GM12878 (cell line): ENCODE measurements at regions of chr15 and their contacts with region 1.

Region 1: DNA sequence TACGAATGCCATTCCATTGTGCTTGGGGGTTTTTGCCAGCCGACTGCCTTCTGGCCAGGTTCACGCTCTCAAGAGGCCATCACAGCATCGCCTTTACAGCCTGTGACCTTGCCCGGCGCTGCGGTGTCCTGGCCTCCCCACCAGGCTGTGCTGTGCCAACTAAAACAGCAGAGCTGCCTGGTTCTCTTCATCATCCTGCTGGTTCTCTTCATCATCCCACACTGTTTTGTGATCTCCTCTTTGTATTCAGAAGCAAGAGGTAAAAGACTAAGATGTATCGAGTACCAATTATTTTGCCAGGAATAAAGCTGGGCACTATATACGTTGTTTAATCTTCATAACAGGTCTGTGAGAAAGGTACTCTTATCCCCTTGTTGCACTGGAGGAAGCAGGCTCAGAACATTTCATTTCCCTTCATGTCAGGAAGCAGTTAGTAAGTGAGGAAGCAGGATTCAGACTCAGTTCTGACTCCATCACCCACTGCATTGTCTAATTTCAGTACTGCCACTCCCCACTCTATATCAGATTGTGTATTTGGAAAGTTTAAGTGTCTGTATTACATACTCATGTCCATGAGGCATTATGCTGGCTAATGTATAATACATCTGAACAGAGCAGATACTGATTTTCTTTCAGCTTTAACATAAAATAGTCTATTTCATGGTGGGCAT is 92.7 kb downstream of the LRRC28 start:
- DNase-seq: no peak
- ATAC-seq: peak; percentile 80
- H3K4me3 ChIP-seq: no peak overlapping the region
- H3K27ac ChIP-seq: no peak overlapping the region
- H3K4me1 ChIP-seq: peaks cover 16% of the 10 kb centered on the region
- H3K27me3 ChIP-seq: no peaks in the 10 kb centered on the region
- CTCF ChIP-seq: peak; percentile 45 to 52 (median 47); a peak in 5 of 6 replicates
- EP300 ChIP-seq: no peak
- POLR2A ChIP-seq: no peak
- RAD21 ChIP-seq: peak; percentile 54

Region 2: GRCh38 chr15:99213187-99213811 is 130.7 kb before region 1 on chr15:
- CTCF ChIA-PET with region 1: no interaction called
- POLR2A ChIA-PET with region 1: no interaction called
- RAD21 ChIA-PET with region 1: no interaction called
- SMC1A ChIA-PET with region 1: no interaction called
- in situ Hi-C with region 1: no loop called
- intact Hi-C with region 1: no loop called
- DNase-seq: peak; percentile 4
- ATAC-seq: peak; percentile 93
- H3K4me3 ChIP-seq: no peak overlapping the region
- H3K27ac ChIP-seq: no peak overlapping the region
- H3K4me1 ChIP-seq: no peaks in the 10 kb centered on the region
- H3K27me3 ChIP-seq: no peaks in the 10 kb centered on the region
- CTCF ChIP-seq: peak; percentile 83 to 92 (median 85)
- EP300 ChIP-seq: no peak
- POLR2A ChIP-seq: no peak
- RAD21 ChIP-seq: peak; percentile 94

Region 3: DNA sequence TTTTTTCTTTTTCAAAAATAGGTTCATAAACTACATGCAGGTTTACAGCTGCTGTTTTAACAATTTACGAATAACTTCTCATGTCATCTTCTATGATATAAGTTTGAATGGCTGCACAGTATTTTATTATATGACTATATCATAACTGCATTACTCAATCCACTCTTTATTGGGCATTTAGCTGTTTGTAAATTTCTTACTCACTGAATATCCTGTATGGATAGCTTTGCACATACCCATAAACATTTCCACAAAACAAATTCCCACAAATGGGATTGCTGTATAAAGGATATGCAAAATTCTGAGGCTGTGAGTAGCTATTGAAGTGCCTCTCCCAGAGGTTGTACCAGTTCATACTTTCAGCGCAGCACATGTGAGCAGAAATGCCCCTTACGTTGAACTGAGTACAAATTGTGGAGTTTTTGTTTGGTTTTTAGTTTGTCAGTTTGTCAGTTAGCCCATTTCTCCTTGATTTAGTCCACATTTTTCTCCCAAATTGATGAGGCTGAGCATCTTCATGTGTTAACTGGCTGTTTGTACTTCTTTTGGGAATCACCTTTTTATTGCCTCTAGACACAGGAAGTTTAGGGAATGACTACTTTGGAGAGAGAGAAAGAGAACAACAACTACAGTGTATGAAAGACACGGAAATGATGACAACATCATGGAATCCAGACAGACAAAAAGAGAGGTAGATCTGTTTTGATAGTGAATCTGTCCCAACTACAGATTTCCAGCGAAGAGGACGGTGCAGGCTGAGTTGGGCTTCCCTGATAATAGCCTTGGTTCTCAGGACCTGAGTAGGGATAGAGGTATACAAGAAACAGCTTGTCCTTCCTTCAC is 119.4 kb before region 1 on chr15:
- CTCF ChIA-PET with region 1: no interaction called
- POLR2A ChIA-PET with region 1: no interaction called
- RAD21 ChIA-PET with region 1: no interaction called
- SMC1A ChIA-PET with region 1: no interaction called
- in situ Hi-C with region 1: no loop called
- intact Hi-C with region 1: no loop called
- DNase-seq: no peak
- ATAC-seq: no peak
- H3K4me3 ChIP-seq: no peak overlapping the region
- H3K27ac ChIP-seq: no peak overlapping the region
- H3K4me1 ChIP-seq: no peaks in the 10 kb centered on the region
- H3K27me3 ChIP-seq: no peaks in the 10 kb centered on the region
- CTCF ChIP-seq: no peak
- EP300 ChIP-seq: no peak
- POLR2A ChIP-seq: no peak
- RAD21 ChIP-seq: no peak

Region 4: DNA sequence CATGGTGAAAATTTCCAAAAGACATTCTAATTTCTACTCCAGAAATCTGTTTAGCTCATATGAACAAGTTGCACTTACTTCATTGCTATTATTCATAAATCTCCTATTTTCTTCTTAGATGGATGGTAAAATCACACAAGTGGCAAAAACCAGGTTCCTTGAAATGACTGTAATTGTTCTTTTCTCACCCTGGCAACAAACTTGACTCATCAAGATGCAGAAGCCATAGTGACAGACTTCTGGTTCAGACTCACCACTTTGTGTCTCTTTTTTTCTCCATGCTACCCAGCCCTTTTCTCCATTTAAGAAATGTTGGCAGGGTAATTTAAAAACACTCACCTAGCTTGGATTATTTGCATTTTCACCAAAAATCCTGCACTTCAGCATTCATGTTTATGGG is 10.6 kb before region 1 on chr15:
- CTCF ChIA-PET with region 1: interaction called, 11 read pairs
- POLR2A ChIA-PET with region 1: interaction called, 3 read pairs
- RAD21 ChIA-PET with region 1: no interaction called
- SMC1A ChIA-PET with region 1: interaction called, 3 read pairs
- in situ Hi-C with region 1: no loop called
- intact Hi-C with region 1: no loop called
- DNase-seq: no peak
- ATAC-seq: no peak
- H3K4me3 ChIP-seq: no peak overlapping the region
- H3K27ac ChIP-seq: no peak overlapping the region
- H3K4me1 ChIP-seq: no peaks in the 10 kb centered on the region
- H3K27me3 ChIP-seq: no peaks in the 10 kb centered on the region
- CTCF ChIP-seq: no peak
- EP300 ChIP-seq: no peak
- POLR2A ChIP-seq: no peak
- RAD21 ChIP-seq: no peak

Region 5: DNA sequence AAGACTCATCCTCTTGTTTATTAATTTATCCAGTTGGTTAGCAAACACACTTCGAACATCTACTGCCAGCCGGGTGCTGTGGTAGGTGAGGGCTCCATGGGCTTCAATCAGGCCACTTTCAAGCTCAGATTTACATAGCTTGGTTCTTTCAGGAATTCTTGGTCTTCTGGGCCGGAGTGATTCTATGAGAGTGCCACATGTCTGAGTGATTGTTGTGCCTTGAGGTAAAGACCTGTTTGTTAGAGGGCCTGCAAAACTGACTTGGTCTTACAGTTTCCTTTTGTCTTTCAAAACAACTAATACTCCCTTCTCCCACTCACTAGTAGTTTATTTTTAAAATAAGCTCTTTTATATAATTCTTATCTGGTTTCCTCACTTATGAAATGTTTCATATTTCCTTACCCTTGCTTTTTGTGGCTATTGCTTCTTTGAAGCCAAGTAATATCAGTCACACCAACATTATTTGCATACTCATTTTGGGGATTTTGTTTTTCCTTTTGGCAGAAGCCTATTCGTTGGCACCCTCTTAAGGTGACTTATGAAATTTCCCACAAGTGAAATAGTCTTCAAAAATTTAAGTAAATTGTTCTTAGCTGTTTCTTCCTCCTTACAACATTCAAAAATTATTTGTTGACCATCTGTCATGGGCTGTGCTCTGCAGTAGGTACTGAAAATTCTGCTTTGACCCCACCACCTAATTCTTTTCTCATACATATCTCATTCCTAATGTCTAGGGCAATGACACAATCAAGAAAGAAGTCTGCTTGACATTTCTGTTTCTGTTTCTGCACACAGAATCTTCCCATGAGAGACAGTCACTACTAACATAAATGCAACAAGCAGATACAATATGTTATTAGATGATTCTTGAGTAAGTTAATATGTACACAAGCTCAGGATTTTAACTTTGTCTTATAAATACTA is 27.4 kb after region 1 on chr15:
- CTCF ChIA-PET with region 1: interaction called, 18 read pairs
- POLR2A ChIA-PET with region 1: no interaction called
- RAD21 ChIA-PET with region 1: interaction called, 6 read pairs
- SMC1A ChIA-PET with region 1: interaction called, 6 read pairs
- in situ Hi-C with region 1: no loop called
- intact Hi-C with region 1: no loop called
- DNase-seq: peak; percentile 63
- ATAC-seq: peak; percentile 92
- H3K4me3 ChIP-seq: no peak overlapping the region
- H3K27ac ChIP-seq: peak overlapping the region; percentile 71
- H3K4me1 ChIP-seq: peaks cover 14% of the 10 kb centered on the region
- H3K27me3 ChIP-seq: no peaks in the 10 kb centered on the region
- CTCF ChIP-seq: peak; percentile 12 to 52 (median 25); a peak in 3 of 6 replicates
- EP300 ChIP-seq: no peak
- POLR2A ChIP-seq: no peak
- RAD21 ChIP-seq: peak; percentile 77